ENCODE measurements at regions of chr5 and their contacts with region 1.

Region 1: GRCh38 chr5:15995341-15996052 is 184.1 kb downstream of the MARCHF11 start:
- DNase-seq: peak; percentile 23
- H3K4me3 ChIP-seq: no peak overlapping the region
- H3K27ac ChIP-seq: no peak overlapping the region
- H3K4me1 ChIP-seq: peaks cover 13% of the 10 kb centered on the region
- H3K27me3 ChIP-seq: no peaks in the 10 kb centered on the region
- CTCF ChIP-seq: peak; percentile 44 to 64

Region 2: DNA sequence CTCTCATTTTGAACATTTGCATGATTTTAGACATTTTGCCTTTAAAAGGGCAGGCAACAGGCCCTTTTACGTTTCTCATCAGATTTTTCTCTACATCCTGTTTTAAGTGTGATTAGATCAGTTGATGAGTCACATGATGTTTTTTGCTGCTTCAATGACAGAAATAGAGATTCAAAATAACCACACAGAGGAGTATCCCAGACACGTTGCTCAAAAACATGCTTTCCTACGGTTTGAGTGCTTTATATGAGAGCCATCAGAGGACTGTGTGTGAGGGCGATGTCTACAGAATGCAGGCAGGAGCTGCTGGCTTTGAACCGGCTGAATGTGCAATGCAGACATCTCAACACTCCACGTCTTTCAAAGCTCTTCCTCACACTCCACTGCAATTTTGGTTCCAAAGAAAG is 1288.9 kb before region 1 on chr5:
- CTCF ChIA-PET with region 1: no interaction called
- dilution Hi-C with region 1: no loop called
- in situ Hi-C with region 1: loop called in 1 of 2 experiments (anchors 25 kb)
- intact Hi-C with region 1: no loop called
- DNase-seq: peak; percentile 44
- H3K4me3 ChIP-seq: no peak overlapping the region
- H3K27ac ChIP-seq: no peak overlapping the region
- H3K4me1 ChIP-seq: peaks cover 20% of the 10 kb centered on the region
- H3K27me3 ChIP-seq: no peaks in the 10 kb centered on the region
- CTCF ChIP-seq: no peak

Region 3: GRCh38 chr5:15105796-15106393 is 889.6 kb before region 1 on chr5:
- CTCF ChIA-PET with region 1: interaction called, 6 read pairs
- dilution Hi-C with region 1: no loop called
- in situ Hi-C with region 1: loop called in 1 of 2 experiments (anchors 25 kb)
- intact Hi-C with region 1: loop called (anchors 1 kb)
- DNase-seq: peak; percentile 41
- H3K4me3 ChIP-seq: no peak overlapping the region
- H3K27ac ChIP-seq: no peak overlapping the region
- H3K4me1 ChIP-seq: no peaks in the 10 kb centered on the region
- H3K27me3 ChIP-seq: no peaks in the 10 kb centered on the region
- CTCF ChIP-seq: peak; percentile 79 to 88

Region 4: DNA sequence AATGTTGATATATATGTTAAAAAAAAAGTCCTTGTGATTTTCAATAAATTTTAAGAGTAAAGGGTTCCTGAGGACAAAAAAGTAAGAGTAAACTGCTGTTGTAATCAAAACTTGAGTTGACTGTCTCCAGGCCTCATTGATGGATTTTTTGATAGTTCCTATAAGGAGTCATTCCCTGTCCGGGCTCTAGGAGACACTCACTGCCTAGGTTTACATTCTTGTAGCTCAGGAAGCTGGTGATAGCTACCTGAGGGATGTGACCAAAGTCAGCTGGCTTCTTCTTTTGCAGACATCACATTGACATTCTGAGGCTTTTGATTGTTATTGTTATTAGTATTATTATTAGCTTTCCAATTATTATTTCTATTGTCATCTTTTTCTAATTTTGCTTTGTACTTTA is 612.0 kb before region 1 on chr5:
- CTCF ChIA-PET with region 1: no interaction called
- dilution Hi-C with region 1: no loop called
- in situ Hi-C with region 1: no loop called
- intact Hi-C with region 1: loop called (anchors 2 kb)
- DNase-seq: no peak
- H3K4me3 ChIP-seq: no peak overlapping the region
- H3K27ac ChIP-seq: no peak overlapping the region
- H3K4me1 ChIP-seq: no peaks in the 10 kb centered on the region
- H3K27me3 ChIP-seq: no peaks in the 10 kb centered on the region
- CTCF ChIP-seq: no peak

Region 5: GRCh38 chr5:15499528-15500324 is 495.8 kb before region 1 on chr5 and contains the start of gene FBXL7:
- CTCF ChIA-PET with region 1: no interaction called
- dilution Hi-C with region 1: no loop called
- in situ Hi-C with region 1: no loop called
- intact Hi-C with region 1: loop called (anchors 1 kb)
- DNase-seq: peak; percentile 52
- H3K4me3 ChIP-seq: peak within 1 kb of the TSS in 2 of 3 experiments; percentile 25 to 36
- H3K27ac ChIP-seq: no peak within 1 kb of the TSS
- H3K4me1 ChIP-seq: no peaks in the 10 kb centered on the region
- H3K27me3 ChIP-seq: peaks cover 8% of the 10 kb centered on the region
- CTCF ChIP-seq: no peak
- total RNA-seq, gene FBXL7: 1.0 to 2.4 TPM

Region 6: GRCh38 chr5:15827741-15828140 is 167.8 kb before region 1 on chr5:
- CTCF ChIA-PET with region 1: no interaction called
- dilution Hi-C with region 1: no loop called
- in situ Hi-C with region 1: no loop called
- intact Hi-C with region 1: loop called (anchors 5 kb)
- DNase-seq: no peak
- H3K4me3 ChIP-seq: no peak overlapping the region
- H3K27ac ChIP-seq: no peak overlapping the region
- H3K4me1 ChIP-seq: no peaks in the 10 kb centered on the region
- H3K27me3 ChIP-seq: no peaks in the 10 kb centered on the region
- CTCF ChIP-seq: no peak

Measured in mammary epithelial cell (primary cell).